T-cell (primary cell): ENCODE measurements at regions of chr2 and their contacts with region 1.

Region 1: DNA sequence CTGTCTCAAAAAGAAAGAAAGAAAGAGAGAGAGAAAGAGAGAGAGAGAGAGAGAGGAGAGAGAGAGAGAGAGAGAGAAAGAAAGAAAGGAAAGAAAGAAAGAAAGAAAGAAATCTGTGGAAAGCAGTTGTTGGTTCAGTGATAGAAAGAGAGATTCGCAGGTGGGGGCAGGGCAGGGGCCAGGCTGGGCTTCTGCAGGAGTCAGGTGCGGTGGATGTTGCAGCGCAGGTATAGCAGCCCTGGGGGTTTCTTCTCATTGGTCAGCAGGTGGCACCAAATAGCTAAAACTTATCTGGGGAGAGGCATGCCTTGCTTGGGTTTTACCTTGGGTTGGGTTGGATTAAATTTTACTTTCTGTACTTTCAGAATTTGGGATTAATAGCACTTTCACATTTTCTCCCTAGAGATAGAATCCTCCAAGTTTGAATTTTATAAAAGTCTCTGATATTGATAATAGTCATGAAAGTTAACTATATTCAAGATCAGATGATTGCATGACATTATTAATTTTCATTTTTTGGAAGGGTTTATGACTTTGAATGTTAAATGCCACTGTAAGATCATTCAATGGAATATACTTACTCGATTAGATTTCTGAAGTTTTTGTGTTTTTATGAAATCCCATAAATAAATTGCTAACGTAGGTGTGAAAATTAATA is 66.6 kb downstream of the SPTBN1 start:
- DNase-seq: peak; percentile 30 to 90 (median 59)
- ATAC-seq: peak; percentile 87 to 100 (median 96)
- H3K4me3 ChIP-seq: no peak overlapping the region
- H3K4me3 Mint-ChIP-seq: peak overlapping the region in 1 of 3 donors; percentile 22
- H3K27ac ChIP-seq: no peak overlapping the region
- H3K27ac Mint-ChIP-seq: no peak overlapping the region
- H3K4me1 ChIP-seq: peaks cover 0 to 3% of the 10 kb centered on the region in 2 experiments
- H3K4me1 Mint-ChIP-seq: peaks cover 6 to 11% (median 9%) of the 10 kb centered on the region in 3 donors
- H3K27me3 ChIP-seq: no peaks in the 10 kb centered on the region
- H3K27me3 Mint-ChIP-seq: peaks cover 10 to 11% of the 10 kb centered on the region in 2 donors

Region 2: GRCh38 chr2:54597153-54597848 is 74.5 kb after region 1 on chr2:
- CTCF ChIA-PET with region 1: interaction called, 3 to 15 read pairs
- POLR2A ChIA-PET with region 1: interaction called in 1 of 2 experiments, 6 read pairs
- DNase-seq: peak in 5 of 35 experiments; percentile 14 to 44 (median 25)
- ATAC-seq: peak in 2 of 4 experiments; percentile 28 to 45
- H3K4me3 ChIP-seq: peak overlapping the region in 1 of 2 donors; percentile 25
- H3K4me3 Mint-ChIP-seq: peak overlapping the region; percentile 71 to 82 (median 78)
- H3K27ac ChIP-seq: peak overlapping the region; percentile 62
- H3K27ac Mint-ChIP-seq: peak overlapping the region; percentile 99 to 100
- H3K4me1 ChIP-seq: peaks cover 81 to 89% of the 10 kb centered on the region in 2 experiments
- H3K4me1 Mint-ChIP-seq: peaks cover 93 to 100% (median 98%) of the 10 kb centered on the region in 3 donors
- H3K27me3 ChIP-seq: no peaks in the 10 kb centered on the region
- H3K27me3 Mint-ChIP-seq: no peaks in the 10 kb centered on the region

Region 3: GRCh38 chr2:54624591-54625071 is 101.9 kb after region 1 on chr2:
- CTCF ChIA-PET with region 1: interaction called in 1 of 2 experiments, 10 read pairs
- POLR2A ChIA-PET with region 1: no interaction called
- DNase-seq: no peak
- ATAC-seq: no peak
- H3K4me3 ChIP-seq: no peak overlapping the region
- H3K4me3 Mint-ChIP-seq: no peak overlapping the region
- H3K27ac ChIP-seq: no peak overlapping the region
- H3K27ac Mint-ChIP-seq: no peak overlapping the region
- H3K4me1 ChIP-seq: peaks cover 0 to 3% of the 10 kb centered on the region in 2 experiments
- H3K4me1 Mint-ChIP-seq: peaks cover 6 to 16% (median 11%) of the 10 kb centered on the region in 3 donors
- H3K27me3 ChIP-seq: no peaks in the 10 kb centered on the region
- H3K27me3 Mint-ChIP-seq: no peaks in the 10 kb centered on the region

Region 4: GRCh38 chr2:54634564-54635511 is 112.1 kb after region 1 on chr2:
- CTCF ChIA-PET with region 1: interaction called, 5 to 10 read pairs
- POLR2A ChIA-PET with region 1: no interaction called
- DNase-seq: peak in 12 of 35 experiments; percentile 2 to 47 (median 18)
- ATAC-seq: peak; percentile 31 to 85 (median 54)
- H3K4me3 ChIP-seq: no peak overlapping the region
- H3K4me3 Mint-ChIP-seq: peak overlapping the region in 1 of 3 donors; percentile 51
- H3K27ac ChIP-seq: peak overlapping the region; percentile 4
- H3K27ac Mint-ChIP-seq: peak overlapping the region; percentile 78 to 84
- H3K4me1 ChIP-seq: peaks cover 11 to 13% of the 10 kb centered on the region in 2 experiments
- H3K4me1 Mint-ChIP-seq: peaks cover 43 to 45% (median 44%) of the 10 kb centered on the region in 3 donors
- H3K27me3 ChIP-seq: no peaks in the 10 kb centered on the region
- H3K27me3 Mint-ChIP-seq: no peaks in the 10 kb centered on the region

Region 5: DNA sequence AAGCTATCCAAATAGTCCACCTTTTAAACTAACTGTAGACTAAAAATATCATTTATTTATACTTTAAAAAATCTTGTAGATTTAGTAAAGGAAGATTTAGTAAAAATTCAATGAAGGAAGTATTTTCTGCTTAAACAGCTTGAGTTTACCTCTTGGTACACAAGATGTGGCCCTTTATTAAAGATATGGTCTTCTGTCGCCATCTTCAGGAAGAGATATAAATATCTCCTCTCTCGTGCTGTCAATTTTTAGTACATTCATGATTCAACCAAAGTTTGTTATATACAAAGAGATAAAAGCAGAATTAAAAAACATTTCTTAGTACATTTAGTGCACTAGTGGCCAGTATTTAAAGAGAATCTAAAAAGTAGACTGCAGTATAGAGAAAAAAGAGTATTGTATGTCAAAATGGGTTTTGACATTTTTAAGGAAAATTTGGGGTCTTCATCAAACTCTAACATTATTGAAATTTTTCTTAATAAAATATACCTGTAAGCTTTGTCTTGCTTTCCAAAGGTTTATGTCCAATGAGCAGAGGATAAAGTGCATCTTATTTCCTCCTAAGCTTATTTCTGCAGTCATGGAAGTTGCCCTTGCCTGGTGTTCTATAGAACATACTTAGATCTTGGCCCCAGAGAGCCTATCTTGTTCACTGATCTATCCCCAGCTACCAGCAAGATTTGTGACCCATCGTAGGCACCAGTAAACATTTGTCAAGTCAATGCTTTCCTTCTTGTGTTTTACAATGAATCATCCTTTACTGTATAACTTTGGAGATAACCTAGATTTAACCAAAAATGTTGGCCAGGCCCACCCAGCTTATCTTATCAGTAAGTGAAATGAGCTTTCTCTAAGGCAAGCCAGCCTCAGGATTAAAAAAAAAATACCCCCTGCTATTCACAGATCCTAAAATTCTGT is 182.2 kb after region 1 on chr2:
- CTCF ChIA-PET with region 1: interaction called, 26 to 83 read pairs
- POLR2A ChIA-PET with region 1: interaction called in 1 of 2 experiments, 3 read pairs
- DNase-seq: peak in 1 of 35 experiments; percentile 77
- ATAC-seq: peak; percentile 35 to 61 (median 59)
- H3K4me3 ChIP-seq: no peak overlapping the region
- H3K4me3 Mint-ChIP-seq: no peak overlapping the region
- H3K27ac ChIP-seq: no peak overlapping the region
- H3K27ac Mint-ChIP-seq: no peak overlapping the region
- H3K4me1 ChIP-seq: peaks cover 0 to 15% of the 10 kb centered on the region in 2 experiments
- H3K4me1 Mint-ChIP-seq: peaks cover 0 to 8% (median 2%) of the 10 kb centered on the region in 3 donors
- H3K27me3 ChIP-seq: peaks cover 0 to 17% of the 10 kb centered on the region in 2 experiments
- H3K27me3 Mint-ChIP-seq: peaks cover 13 to 15% of the 10 kb centered on the region in 2 donors

Region 6: GRCh38 chr2:54838585-54839035 is 315.9 kb after region 1 on chr2:
- CTCF ChIA-PET with region 1: interaction called, 4 to 14 read pairs
- POLR2A ChIA-PET with region 1: no interaction called
- DNase-seq: peak in 34 of 35 experiments; percentile 4 to 81 (median 46)
- ATAC-seq: peak; percentile 71 to 84 (median 76)
- H3K4me3 ChIP-seq: no peak overlapping the region
- H3K4me3 Mint-ChIP-seq: no peak overlapping the region
- H3K27ac ChIP-seq: no peak overlapping the region
- H3K27ac Mint-ChIP-seq: no peak overlapping the region
- H3K4me1 ChIP-seq: no peaks in the 10 kb centered on the region
- H3K4me1 Mint-ChIP-seq: no peaks in the 10 kb centered on the region
- H3K27me3 ChIP-seq: no peaks in the 10 kb centered on the region
- H3K27me3 Mint-ChIP-seq: no peaks in the 10 kb centered on the region